ENCODE measurements at regions of chr15 and their contacts with region 1.

Region 1: GRCh38 chr15:72796515-72797337 is 13.2 kb upstream of the ADPGK start:
- DNase-seq: peak; percentile 75
- ATAC-seq: peak; percentile 95

Region 2: DNA sequence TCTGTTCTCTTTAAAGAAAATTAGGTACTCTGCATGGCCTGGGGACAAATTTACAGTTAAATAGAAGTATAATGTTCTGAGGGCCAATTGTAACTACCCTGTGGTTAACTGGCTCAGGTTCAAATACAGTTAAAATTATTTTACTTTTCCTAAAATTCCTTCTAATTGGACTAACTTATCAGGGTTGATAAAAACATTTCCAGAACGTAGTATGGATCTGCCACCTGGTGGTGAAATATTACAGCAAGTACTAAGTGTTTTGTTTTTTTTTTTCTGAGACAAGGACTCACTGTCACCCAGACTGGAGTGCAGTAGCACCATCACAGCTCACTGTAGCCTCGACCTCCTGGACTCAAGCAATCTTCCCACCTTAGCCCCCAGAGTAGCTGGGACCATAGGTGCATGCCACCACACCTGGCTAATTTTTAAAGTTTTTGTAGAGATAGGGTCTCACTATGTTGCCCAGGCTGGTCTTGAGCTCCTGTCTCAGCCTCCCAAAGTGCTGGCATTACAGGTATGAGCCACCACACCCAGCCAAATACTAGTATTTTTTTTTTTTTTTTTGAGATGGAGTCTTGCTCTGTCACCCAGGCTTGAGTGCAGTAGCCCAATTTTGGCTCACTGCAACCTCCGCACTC is 284.7 kb after region 1 on chr15:
- intact Hi-C with region 1: loop called (anchors 2 to 5 kb)
- DNase-seq: no peak
- ATAC-seq: peak; percentile 53

Measured in left cardiac atrium (tissue), 4 donors.